ENCODE measurements at regions of chr19 and their contacts with region 1.

Region 1: GRCh38 chr19:11025445-11025844 is 63.8 kb upstream of the LDLR start:
- DNase-seq: no peak

Region 2: DNA sequence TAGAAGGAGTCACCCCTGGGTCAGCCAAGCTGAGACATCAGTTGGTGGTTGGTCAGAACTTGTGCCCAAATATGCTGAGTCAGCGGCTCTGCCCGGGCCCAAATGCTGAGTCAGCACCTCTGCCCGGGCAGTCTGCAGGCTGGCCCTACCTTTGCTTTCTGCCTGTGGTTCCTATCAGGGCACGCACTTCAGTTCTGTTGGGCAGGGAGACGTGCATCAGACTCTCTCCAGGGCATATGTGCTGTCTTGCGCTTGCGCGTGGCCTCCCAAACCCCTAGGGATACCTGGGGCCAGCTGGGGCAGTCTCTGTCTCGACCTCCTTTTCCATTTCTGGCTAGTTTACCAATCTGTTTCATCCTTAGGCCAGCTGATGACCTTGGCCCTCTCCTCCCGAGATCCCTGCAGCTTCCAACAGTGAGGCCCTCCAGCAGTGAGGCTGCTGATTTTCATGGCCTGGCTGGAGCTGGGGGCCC is 39.4 kb after region 1 on chr19:
- in situ Hi-C with region 1: loop called (anchors 5 kb)
- DNase-seq: peak; percentile 13